Cardiac septum (tissue), 1 donor: ENCODE measurements at regions of chr9 and their contacts with region 1.

Region 1: DNA sequence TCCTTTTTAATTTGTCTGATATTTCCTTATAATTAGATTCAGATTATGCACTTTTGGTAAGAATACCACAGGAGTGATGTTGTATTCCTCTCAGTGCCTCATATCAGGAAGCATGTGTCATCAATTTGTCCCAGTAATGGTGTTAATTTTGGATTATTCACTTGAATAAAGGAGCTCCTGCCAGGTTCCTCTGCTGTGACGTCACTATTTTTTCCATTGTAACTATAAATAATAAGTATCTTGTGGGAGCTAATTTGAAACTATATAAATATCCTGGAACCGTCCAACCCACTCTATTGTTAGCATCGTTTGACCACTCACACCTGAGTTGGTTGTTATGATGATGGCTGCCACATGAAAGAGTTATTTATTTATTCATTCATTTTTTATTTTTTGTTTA is 107.9 kb downstream of the INVS start:
- DNase-seq: no peak

Region 2: DNA sequence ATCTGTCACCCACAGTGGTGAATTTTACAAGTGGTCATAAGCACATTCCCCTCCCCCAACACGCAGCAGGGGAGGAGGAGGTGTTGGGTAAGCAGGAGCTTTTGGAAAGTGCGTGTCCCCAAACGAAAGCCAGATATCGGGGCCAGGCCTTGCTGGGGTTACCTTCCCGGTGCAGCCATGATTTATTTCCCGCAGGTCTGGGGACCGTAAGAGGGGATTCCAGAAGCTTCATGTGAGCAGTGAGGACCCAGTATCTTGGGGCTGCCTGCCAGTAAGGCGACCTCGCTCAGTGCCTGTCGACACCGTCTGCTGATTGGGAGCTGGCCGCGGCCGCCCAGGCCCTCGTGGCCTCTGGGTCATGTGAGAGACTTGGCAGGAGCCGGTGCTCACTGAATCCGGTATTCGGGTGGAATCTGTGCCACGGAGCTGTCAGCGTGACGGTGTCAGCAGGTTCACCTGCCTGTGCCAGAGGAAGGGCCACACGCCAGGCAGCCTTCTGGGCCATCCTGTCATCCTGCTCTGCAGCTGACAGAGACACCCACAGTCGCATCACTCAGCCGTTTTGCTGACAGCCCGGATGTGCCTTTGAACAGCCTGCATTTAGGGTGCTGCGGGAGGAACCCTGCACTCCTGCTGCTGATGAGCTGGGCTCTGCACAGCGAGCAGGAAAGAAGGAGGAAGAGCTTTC is 947.5 kb before region 1 on chr9:
- intact Hi-C with region 1: loop called (anchors 10 kb)
- DNase-seq: peak; percentile 94